HEK293 (cell line): ENCODE measurements at regions of chr11 and their contacts with region 1.

Region 1: DNA sequence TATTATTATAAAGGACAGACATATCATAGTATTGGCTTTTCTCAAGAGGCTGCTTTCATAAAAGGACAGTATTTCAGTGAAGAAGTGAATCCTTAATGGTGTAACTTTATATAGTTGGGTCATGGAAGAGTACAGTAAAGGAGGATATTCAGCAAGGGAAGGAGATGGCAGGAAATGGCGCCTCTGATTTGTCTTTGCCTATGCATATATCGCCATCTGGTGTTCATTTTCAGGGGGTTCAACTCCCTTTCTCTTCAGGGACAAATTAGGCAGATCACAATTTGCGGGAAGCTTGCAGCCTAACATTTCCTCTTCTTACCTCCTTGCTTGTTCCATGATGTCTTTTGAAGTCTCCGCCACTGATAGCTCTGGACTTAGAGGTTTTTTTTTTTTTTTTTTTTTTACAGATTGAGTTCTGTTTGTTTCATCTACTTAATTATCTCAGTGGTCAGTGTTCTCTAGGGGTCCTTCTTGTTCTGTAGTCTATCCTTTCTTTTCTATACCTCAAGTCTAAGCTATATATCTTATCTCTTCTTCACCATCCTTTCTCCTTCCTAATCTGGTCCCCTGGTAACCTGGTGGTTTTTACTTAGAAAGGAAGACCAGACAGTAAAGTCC is 21.8 kb upstream of the RRM1 start:
- H3K4me3 ChIP-seq: no peak overlapping the region
- H3K27ac ChIP-seq: no peak overlapping the region
- H3K4me1 ChIP-seq: peaks cover 4% of the 10 kb centered on the region; the same call in 1 of the 2 replicates
- CTCF ChIP-seq: peak; percentile 52; the same call in 1 of the 2 replicates

Region 2: GRCh38 chr11:3797329-3798095 is 275.3 kb before region 1 on chr11 and contains the start of gene NUP98:
- CTCF ChIA-PET with region 1: interaction called, 13 read pairs
- POLR2A ChIA-PET with region 1: no interaction called
- H3K4me3 ChIP-seq: peak within 1 kb of the TSS; percentile 68
- H3K27ac ChIP-seq: peak within 1 kb of the TSS; percentile 72
- H3K4me1 ChIP-seq: no peaks in the 10 kb centered on the region
- CTCF ChIP-seq: peak; percentile 50

Region 3: GRCh38 chr11:3824714-3825472 is 247.9 kb before region 1 on chr11:
- CTCF ChIA-PET with region 1: interaction called, 18 read pairs
- POLR2A ChIA-PET with region 1: no interaction called
- H3K4me3 ChIP-seq: no peak overlapping the region
- H3K27ac ChIP-seq: no peak overlapping the region
- H3K4me1 ChIP-seq: no peaks in the 10 kb centered on the region
- CTCF ChIP-seq: peak; percentile 85

Region 4: DNA sequence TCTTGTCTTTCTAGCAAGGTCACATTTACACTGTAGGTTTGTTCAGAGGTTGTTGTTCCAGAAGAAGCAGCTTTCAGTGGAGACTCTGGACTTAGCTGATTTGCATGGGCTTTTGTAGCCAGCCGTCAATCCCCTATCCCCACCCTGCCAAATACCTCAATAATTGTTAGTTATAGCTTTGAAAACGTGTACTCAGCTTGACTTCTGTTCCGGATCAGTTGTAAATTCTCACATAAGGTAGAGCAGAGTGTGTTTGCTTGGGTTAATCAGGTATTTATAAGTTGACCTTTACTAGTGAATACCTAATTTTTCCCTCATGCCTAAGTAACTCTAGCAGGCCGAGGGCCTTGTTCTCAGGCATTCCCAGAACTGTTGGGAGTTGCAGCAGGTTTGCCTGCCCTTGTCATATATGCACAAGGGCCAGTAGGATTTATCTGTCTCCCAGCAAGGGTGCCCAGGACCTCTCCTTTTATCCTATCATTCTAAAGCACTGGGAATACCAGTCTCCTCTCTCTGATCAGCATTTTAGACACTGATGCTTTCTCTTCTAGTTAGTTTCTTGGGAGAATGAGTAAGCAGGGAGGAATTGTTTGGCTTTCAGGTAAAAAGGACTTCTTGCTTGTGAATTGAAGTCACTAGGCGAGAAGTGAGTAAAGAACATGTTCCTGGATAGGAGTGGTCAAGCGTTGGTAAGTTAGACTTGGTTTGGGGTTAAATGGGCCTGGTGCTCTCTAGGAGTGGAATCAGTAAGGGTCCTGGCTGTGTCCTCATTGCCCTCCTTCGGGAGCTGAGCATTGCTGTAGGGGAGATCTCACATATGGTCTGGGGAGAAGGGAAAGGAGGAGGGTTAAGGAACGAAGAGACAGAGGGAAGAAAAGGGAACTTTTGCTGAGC is 195.2 kb before region 1 on chr11:
- CTCF ChIA-PET with region 1: interaction called, 6 read pairs
- POLR2A ChIA-PET with region 1: interaction called, 10 read pairs
- H3K4me3 ChIP-seq: no peak overlapping the region
- H3K27ac ChIP-seq: no peak overlapping the region
- H3K4me1 ChIP-seq: no peaks in the 10 kb centered on the region; the same call in 1 of the 2 replicates
- CTCF ChIP-seq: no peak

Region 5: DNA sequence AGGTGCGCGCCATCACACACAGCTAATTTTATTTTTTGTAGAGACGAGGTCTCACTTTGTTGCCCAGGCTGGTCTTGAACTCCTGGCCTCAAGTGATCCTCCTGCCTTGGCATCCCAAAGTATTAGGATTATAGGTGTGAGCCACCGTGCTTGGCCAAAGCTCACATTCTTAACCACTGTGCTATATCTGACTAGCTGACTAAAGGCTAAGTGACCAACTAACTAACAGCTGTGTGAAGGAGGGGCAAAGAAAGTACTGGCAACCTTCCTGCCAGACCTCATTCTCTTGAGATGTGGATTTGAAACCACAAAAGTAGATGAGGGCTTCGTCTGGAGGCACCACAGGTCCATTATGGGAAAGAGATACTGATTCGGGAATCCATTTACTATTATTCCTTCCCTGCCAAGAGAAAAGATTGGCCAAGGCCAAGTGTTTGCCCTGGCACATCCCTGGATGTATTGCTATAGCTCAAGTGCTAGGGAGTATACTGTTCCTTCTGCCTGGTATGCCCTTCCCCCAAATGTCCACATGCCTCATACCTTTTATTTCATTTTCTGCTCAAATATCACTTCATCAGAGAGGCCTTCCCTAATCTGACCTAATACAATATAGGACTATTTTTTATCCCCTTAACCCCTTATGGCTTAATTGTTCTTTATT is 30.9 kb before region 1 on chr11:
- CTCF ChIA-PET with region 1: interaction called, 11 read pairs
- POLR2A ChIA-PET with region 1: no interaction called
- H3K4me3 ChIP-seq: no peak overlapping the region
- H3K27ac ChIP-seq: no peak overlapping the region
- H3K4me1 ChIP-seq: no peaks in the 10 kb centered on the region
- CTCF ChIP-seq: no peak

Region 6: DNA sequence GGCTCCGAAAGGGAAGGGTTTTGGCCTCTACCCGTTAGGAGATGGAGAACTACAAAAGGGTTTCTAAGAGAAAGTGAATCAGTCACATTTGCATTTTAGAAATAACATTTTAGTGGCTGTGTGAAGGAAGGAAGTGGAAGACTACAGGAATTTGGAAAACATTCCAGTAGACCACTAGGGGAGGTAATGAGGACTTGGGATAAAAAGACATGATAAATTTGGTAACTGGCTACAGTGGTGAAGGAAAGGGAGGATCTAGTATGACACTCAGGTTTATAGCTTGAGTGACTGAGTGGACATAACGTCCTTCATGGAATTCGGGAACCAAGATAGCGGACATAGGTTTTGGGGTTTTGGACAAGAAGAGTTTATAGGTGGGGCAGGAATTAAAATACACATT is 14.8 kb after region 1 on chr11:
- CTCF ChIA-PET with region 1: interaction called, 25 read pairs
- POLR2A ChIA-PET with region 1: no interaction called
- H3K4me3 ChIP-seq: no peak overlapping the region
- H3K27ac ChIP-seq: no peak overlapping the region
- H3K4me1 ChIP-seq: no peaks in the 10 kb centered on the region
- CTCF ChIP-seq: no peak